SK-N-SH (cell line): ENCODE measurements at regions of chr22 and their contacts with region 1.

Region 1: DNA sequence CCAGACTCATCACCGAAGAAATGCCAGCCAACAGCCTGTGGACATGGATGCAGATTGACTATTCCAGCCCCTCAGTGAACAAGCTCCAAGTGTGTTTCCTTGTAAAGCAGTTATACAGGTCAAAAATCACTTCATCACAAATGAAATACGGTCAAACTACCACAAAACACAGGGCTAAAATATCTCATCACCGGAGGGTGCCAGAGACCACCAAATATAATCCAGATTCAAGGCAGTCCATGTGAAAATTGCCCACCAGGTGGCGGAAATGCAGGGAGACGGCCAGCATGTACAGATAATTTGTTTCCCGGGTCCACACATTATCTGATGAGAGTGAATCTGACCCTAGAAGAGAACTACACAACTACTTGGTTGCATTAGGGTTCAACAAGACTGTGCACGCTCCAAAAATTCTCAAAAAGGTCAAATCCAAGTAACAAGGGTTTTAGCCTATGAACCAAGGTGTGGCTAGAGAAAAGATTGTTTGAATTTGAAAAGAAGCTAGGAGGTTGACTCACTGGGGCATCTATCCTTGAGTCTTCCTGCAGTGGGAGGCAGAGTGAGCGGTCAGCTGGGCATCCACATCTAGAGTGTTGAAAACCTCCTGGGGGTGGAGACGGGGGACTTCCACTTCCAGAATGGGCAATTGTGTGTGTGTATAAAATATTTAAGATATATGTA is 71.7 kb downstream of the IGLL5 start:
- DNase-seq: peak; percentile 73
- H3K4me3 ChIP-seq: no peak overlapping the region; a peak in 1 of 4 replicates
- H3K27ac ChIP-seq: no peak overlapping the region
- H3K4me1 ChIP-seq: peaks cover 0 to 2% of the 10 kb centered on the region in 2 experiments; a peak in 1 of 4 replicates
- H3K27me3 ChIP-seq: no peaks in the 10 kb centered on the region
- CTCF ChIP-seq: peak; percentile 98
- EP300 ChIP-seq: no peak
- RAD21 ChIP-seq: peak; percentile 100

Region 2: DNA sequence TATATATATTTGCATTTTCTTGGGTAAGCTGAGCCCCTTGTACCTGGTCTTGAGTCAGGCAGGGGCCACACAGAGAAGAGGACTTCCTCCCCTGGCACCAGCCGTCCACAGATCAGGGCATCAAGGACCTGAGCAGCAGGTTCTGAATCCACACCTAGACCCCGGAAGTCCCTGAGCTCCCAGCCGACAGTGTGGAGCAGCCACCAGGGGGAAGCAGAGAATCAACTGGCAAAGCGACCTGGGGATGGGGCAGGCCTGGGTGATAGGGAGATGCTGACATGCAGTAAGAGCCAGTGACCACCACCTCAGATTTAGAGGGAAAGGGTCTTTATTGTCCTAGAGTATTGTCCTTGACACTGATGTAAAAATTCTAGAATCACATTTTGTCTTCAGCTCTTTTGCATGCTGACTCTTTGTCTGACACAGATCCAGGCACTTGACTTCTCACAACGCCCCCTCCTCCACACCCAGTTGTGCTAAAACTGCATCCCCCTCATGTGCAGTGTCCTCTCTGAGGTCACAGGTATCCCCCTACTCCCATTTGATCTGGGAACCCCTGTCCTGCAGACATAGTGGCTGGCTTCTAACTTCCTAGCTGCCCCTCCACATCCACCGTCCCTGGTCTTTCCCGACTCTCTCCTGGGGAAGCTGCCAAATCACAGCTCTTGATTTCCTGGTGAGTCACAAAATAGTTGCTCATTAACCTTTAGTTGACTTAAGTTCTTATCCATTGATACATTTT is 205.6 kb before region 1 on chr22:
- CTCF ChIA-PET with region 1: interaction called, 28 read pairs
- POLR2A ChIA-PET with region 1: no interaction called
- DNase-seq: peak; percentile 79
- H3K4me3 ChIP-seq: peak overlapping the region in 1 of 2 experiments; percentile 35; a peak in 1 of 4 replicates
- H3K27ac ChIP-seq: no peak overlapping the region
- H3K4me1 ChIP-seq: no peaks in the 10 kb centered on the region
- H3K27me3 ChIP-seq: 0 out of 2 replicates have a peak, but pooled peaks cover 4% of the 10 kb centered on the region
- CTCF ChIP-seq: peak; percentile 60
- EP300 ChIP-seq: no peak
- RAD21 ChIP-seq: peak; percentile 63

Region 3: GRCh38 chr22:22935546-22936157 is 23.6 kb before region 1 on chr22:
- CTCF ChIA-PET with region 1: interaction called, 127 read pairs
- POLR2A ChIA-PET with region 1: no interaction called
- DNase-seq: no peak
- H3K4me3 ChIP-seq: no peak overlapping the region
- H3K27ac ChIP-seq: no peak overlapping the region; a peak in 1 of 4 replicates
- H3K4me1 ChIP-seq: peaks cover 0 to 4% of the 10 kb centered on the region in 2 experiments; a peak in 1 of 4 replicates
- H3K27me3 ChIP-seq: no peaks in the 10 kb centered on the region; the same call in 1 of the 2 replicates
- CTCF ChIP-seq: no peak
- EP300 ChIP-seq: no peak
- RAD21 ChIP-seq: no peak

Region 4: DNA sequence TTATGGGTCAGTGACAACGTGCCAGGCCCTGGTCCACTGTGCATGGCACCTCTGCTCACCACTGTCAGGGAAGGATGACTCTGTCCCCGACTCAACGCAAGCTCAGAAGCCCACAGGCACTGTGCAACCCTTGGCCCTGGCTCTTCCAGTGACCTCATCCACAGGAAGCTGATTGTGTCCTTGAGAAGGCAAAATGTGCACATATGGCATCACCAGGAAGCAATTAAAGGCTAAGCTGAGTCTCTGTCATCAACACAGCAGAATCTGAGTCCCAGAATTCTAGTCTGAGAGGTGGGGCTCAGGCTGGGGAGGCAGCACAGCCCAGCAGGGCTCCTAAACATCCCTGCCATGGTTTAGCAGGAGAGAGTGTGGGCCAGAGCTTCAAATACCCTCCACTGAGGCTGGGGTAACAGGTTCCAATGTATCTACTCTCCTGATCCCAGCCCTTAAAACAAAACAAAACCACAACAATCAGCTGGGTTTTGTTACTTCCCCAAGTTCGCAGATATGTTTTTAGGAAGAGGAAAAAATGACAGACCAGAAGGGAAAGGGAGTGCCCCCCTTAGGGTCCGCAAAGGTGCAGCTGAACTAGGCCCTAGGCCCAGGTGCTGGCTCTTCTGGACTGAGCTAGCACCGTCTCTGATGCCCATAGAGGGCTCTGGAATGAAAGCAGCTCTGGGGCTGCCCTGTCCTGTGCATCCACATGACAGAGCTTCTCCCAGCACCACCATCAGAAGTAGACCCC is 77.6 kb after region 1 on chr22:
- CTCF ChIA-PET with region 1: interaction called, 14 read pairs
- POLR2A ChIA-PET with region 1: no interaction called
- DNase-seq: peak; percentile 17
- H3K4me3 ChIP-seq: no peak overlapping the region
- H3K27ac ChIP-seq: no peak overlapping the region
- H3K4me1 ChIP-seq: no peaks in the 10 kb centered on the region; a peak in 2 of 4 replicates
- H3K27me3 ChIP-seq: no peaks in the 10 kb centered on the region
- CTCF ChIP-seq: no peak
- EP300 ChIP-seq: no peak
- RAD21 ChIP-seq: no peak

Region 5: DNA sequence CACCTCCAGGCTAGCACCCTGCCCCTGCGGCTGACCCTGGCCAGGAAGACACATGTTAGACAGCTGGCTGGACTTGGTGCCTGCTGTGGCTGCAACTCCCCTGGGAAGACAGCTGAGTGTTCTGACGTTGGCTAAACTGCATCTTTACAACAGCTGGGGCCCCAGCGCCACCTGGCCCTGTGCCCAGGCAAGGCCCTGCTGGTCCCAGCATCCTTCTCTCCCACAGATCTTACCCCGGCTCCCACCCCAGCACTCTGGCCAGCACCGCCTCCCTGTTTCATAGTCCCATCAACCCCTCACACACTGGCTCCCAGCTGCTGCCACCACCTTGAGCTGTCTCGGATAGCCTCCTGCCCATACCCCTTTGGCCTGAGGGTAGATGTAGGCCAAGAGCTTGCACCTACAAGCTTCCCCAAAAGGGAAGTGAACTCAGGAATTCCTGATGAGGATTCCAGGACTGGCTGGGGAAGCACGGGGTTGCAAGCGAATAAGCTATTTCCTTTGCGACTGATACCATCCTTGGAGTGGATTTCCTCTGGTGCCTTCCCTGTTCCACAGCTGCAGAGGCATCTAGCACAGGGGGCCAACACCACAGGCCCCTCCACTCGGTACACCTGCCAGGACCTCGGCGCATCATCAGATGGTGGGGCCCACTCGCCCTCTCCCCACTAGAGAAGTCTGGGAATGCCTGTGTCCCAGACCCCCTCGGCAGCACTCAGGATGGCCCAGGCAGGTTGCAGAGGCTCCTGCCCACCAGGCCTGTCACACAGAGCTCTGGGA is 154.0 kb after region 1 on chr22:
- CTCF ChIA-PET with region 1: interaction called, 161 read pairs
- POLR2A ChIA-PET with region 1: no interaction called
- DNase-seq: peak; percentile 84
- H3K4me3 ChIP-seq: no peak overlapping the region
- H3K27ac ChIP-seq: peak overlapping the region in 1 of 2 experiments; percentile 86; a peak in 2 of 4 replicates
- H3K4me1 ChIP-seq: peaks cover 0 to 98% of the 10 kb centered on the region in 2 experiments; a peak in 1 of 4 replicates
- H3K27me3 ChIP-seq: no peaks in the 10 kb centered on the region
- CTCF ChIP-seq: no peak
- EP300 ChIP-seq: no peak
- RAD21 ChIP-seq: no peak

Region 6: DNA sequence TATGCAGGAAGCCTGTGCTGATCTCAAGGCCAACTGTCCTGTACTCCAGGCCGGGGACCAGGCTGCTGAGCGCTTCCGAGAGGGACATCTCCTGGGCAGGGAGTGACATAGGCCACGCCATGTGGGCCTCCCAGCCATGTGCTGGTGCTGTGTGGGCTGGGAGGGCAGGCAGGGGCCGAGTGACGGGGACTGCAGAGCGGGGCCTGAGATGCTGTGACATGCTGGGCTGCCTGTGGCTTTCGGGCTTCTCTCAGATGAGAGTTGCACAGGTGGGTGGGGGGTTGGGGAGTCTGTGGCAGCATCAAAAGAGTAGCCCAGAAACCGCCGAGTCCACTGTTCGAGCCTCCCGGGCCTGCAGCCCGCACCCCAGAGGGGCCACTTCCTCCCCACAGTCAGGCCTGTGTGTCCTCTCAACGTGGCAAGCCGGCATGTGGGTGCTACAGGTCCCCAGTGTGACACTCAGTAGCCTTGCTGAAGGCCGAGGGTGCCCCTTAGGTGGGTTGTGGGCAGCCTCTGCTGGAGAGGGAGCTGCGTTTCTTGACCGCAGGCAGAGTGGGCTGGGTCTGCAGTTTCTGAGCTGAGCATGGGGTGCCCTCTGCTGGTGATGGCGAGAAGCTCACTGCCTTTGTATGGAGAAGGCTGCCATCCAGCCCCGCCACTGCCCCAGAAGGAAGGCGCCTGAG is 322.3 kb after region 1 on chr22:
- CTCF ChIA-PET with region 1: interaction called, 57 read pairs
- POLR2A ChIA-PET with region 1: no interaction called
- DNase-seq: peak; percentile 93
- H3K4me3 ChIP-seq: peak overlapping the region in 1 of 2 experiments; percentile 47; a peak in 1 of 4 replicates
- H3K27ac ChIP-seq: peak overlapping the region; percentile 43 to 59; a peak in 3 of 4 replicates
- H3K4me1 ChIP-seq: peaks cover 6 to 14% of the 10 kb centered on the region in 2 experiments; a peak in 3 of 4 replicates
- H3K27me3 ChIP-seq: no peaks in the 10 kb centered on the region
- CTCF ChIP-seq: peak; percentile 86
- EP300 ChIP-seq: no peak
- RAD21 ChIP-seq: peak; percentile 99

Region 7: DNA sequence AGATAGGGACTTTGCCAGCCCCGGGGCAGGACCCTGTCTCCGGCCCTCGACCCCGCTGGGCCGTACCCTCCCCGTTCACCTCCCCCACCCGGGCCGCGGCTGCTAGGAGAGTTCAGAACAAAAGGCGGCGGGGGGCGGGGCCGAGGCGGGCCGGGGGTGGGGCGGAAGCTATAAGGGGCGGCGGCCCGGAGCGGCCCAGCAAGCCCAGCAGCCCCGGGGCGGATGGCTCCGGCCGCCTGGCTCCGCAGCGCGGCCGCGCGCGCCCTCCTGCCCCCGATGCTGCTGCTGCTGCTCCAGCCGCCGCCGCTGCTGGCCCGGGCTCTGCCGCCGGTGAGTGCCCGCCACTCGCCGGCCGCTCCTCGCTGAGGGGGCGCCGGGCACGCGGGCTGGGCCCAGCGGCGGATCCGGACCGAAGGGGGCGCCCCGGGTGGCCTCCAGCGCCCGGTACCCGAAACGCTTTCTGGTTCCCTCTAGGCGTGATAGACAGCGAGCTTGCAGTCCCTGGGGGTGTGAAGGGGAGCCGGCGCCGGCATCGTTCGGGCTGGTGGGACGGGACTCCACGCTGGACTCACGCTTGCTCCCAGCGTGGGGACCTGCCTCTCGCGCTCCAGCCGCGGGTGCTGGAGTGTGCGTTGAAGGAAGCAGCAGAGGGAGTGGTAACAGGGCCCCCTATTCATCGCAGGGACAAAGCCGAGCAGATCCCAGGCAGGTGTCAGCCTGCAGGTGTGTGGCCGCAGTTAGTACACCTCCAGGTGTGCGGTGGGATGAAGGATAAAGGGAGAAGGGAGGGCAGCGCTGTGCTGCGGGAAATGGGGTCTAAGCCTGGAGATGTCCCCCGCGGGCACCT is 813.6 kb after region 1 on chr22 and contains the start of gene MMP11:
- CTCF ChIA-PET with region 1: no interaction called
- POLR2A ChIA-PET with region 1: no interaction called
- DNase-seq: peak; percentile 95
- H3K4me3 ChIP-seq: peak within 1 kb of the TSS; percentile 57 to 67
- H3K27ac ChIP-seq: peak within 1 kb of the TSS in 1 of 2 experiments; percentile 65; a peak in 1 of 4 replicates
- H3K4me1 ChIP-seq: peaks cover 4 to 32% of the 10 kb centered on the region in 2 experiments; a peak in 2 of 4 replicates
- H3K27me3 ChIP-seq: no peaks in the 10 kb centered on the region
- CTCF ChIP-seq: peak; percentile 34
- EP300 ChIP-seq: no peak
- RAD21 ChIP-seq: no peak
- polyA plus RNA-seq, gene MMP11: 50.8 and 64.4 TPM in 2 replicates